Caco-2 (cell line): ENCODE measurements at regions of chr7 and their contacts with region 1.

Region 1: DNA sequence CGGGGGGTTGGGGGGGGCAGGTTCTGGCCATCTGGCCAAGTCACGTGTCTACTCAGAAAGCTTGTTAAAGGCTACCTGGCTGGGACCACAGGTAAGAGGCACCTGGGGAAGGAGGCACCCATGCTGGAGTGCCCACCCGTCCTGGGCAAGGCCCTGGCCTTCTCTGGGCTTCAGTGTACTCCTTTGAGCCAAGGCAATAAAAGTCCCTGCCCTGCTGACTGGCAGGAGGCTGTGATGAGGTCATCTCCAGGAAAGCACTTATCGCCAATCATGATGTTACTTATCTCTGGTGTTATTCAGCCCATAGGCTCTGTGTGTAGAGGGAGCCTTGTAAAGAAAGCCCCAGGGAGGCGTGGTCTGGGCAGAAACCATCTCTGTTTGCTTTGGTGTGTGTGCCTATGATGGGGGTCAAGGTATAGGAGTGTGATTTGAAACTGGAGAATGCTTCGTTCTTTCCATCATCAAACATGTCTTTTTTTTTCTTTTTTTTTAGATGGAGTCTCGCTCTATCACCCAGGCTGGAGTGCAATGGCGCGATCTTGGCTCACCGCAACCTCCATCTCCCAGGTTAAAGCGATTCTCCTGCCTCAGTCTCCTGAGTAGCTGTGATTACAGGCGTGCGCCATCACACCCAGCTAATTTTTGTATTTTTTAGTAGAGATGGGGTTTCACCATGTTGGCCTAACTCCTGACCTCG is 2.5 kb upstream of the CLDN4 start:
- DNase-seq: peak; percentile 85 to 95
- H3K4me3 ChIP-seq: peak overlapping the region; percentile 43
- H3K4me3 Mint-ChIP-seq: peak overlapping the region; percentile 75
- H3K27ac Mint-ChIP-seq: peak overlapping the region; percentile 98
- H3K4me1 ChIP-seq: peaks cover 38% of the 10 kb centered on the region
- H3K4me1 Mint-ChIP-seq: peaks cover 51% of the 10 kb centered on the region
- H3K27me3 ChIP-seq: no peaks in the 10 kb centered on the region
- H3K27me3 Mint-ChIP-seq: no peaks in the 10 kb centered on the region
- CTCF ChIP-seq: no peak

Region 2: DNA sequence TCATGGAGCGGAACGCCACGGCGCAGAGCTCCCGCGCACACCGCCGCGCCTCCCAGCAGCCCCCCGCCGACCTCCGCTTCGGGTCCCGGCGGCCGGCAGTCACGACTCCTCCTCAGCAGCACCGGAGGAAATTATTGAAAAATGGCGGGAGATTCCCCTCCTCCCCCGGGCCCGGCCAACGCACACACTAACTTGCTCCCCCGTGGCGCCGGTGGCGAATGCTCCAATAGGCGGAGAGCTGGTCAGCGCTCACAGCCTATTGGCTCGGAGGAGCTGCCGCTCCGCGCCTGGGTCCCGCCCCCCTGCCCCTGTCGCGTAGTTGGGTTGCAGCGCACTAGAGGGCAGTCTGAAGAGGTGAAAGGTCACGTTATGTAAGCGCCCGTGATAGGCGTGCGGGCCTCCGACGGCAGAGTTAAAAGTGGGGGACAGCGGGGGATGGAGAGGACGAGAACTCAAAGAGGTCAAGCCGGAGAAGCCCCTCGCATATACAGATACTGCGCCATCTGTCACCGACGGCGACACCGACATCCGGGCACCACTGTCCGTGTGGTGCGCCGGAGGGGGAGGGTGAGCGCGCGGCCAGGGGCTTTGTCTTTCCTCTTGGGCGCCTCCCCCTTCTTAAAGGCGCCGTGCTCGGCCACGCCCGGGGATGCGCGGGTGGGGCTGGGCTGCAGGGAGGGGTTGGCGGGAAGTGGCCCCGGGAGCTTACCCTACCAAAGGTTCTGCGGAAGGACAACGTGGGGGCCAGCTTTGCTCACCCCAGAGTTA is 306.0 kb before region 1 on chr7 and contains the start of gene BAZ1B:
- CTCF ChIA-PET with region 1: no interaction called
- POLR2A ChIA-PET with region 1: interaction called, 14 read pairs
- intact Hi-C with region 1: no loop called
- DNase-seq: peak; percentile 99
- H3K4me3 ChIP-seq: peak within 1 kb of the TSS; percentile 77
- H3K4me3 Mint-ChIP-seq: peak within 1 kb of the TSS; percentile 93
- H3K27ac Mint-ChIP-seq: peak within 1 kb of the TSS; percentile 98
- H3K4me1 ChIP-seq: peaks cover 18% of the 10 kb centered on the region
- H3K4me1 Mint-ChIP-seq: peaks cover 18% of the 10 kb centered on the region
- H3K27me3 ChIP-seq: no peaks in the 10 kb centered on the region
- H3K27me3 Mint-ChIP-seq: no peaks in the 10 kb centered on the region
- CTCF ChIP-seq: peak in 1 of 2 experiments; percentile 21
- total RNA-seq, gene BAZ1B: 85.2 and 85.7 TPM in 2 replicates

Region 3: GRCh38 chr7:73738612-73739374 is 89.5 kb before region 1 on chr7 and contains the start of gene ABHD11:
- CTCF ChIA-PET with region 1: interaction called, 5 read pairs
- POLR2A ChIA-PET with region 1: interaction called, 127 read pairs
- intact Hi-C with region 1: loop called (anchors 1 kb)
- DNase-seq: peak; percentile 99
- H3K4me3 ChIP-seq: peak within 1 kb of the TSS; percentile 63
- H3K4me3 Mint-ChIP-seq: peak within 1 kb of the TSS; percentile 98
- H3K27ac Mint-ChIP-seq: peak within 1 kb of the TSS; percentile 100
- H3K4me1 ChIP-seq: peaks cover 46% of the 10 kb centered on the region
- H3K4me1 Mint-ChIP-seq: peaks cover 25% of the 10 kb centered on the region
- H3K27me3 ChIP-seq: no peaks in the 10 kb centered on the region
- H3K27me3 Mint-ChIP-seq: no peaks in the 10 kb centered on the region
- CTCF ChIP-seq: no peak
- total RNA-seq, gene ABHD11: 38.9 and 47.2 TPM in 2 replicates

Region 4: GRCh38 chr7:73792594-73793292 is 35.5 kb before region 1 on chr7:
- CTCF ChIA-PET with region 1: interaction called, 5 read pairs
- POLR2A ChIA-PET with region 1: interaction called, 9 read pairs
- intact Hi-C with region 1: loop called (anchors 1 kb)
- DNase-seq: peak; percentile 91 to 98
- H3K4me3 ChIP-seq: no peak overlapping the region
- H3K4me3 Mint-ChIP-seq: no peak overlapping the region
- H3K27ac Mint-ChIP-seq: peak overlapping the region; percentile 10
- H3K4me1 ChIP-seq: peaks cover 40% of the 10 kb centered on the region
- H3K4me1 Mint-ChIP-seq: peaks cover 37% of the 10 kb centered on the region
- H3K27me3 ChIP-seq: no peaks in the 10 kb centered on the region
- H3K27me3 Mint-ChIP-seq: no peaks in the 10 kb centered on the region
- CTCF ChIP-seq: no peak

Region 5: GRCh38 chr7:73842247-73842895 is 14.1 kb after region 1 on chr7 and contains the start of gene METTL27:
- CTCF ChIA-PET with region 1: interaction called, 8 read pairs
- POLR2A ChIA-PET with region 1: interaction called, 52 read pairs
- intact Hi-C with region 1: no loop called
- DNase-seq: peak; percentile 95
- H3K4me3 ChIP-seq: peak within 1 kb of the TSS; percentile 58
- H3K4me3 Mint-ChIP-seq: peak within 1 kb of the TSS; percentile 84
- H3K27ac Mint-ChIP-seq: peak within 1 kb of the TSS; percentile 73
- H3K4me1 ChIP-seq: peaks cover 12% of the 10 kb centered on the region; the same call in 1 of the 2 replicates
- H3K4me1 Mint-ChIP-seq: peaks cover 18% of the 10 kb centered on the region
- H3K27me3 ChIP-seq: no peaks in the 10 kb centered on the region
- H3K27me3 Mint-ChIP-seq: no peaks in the 10 kb centered on the region
- CTCF ChIP-seq: no peak
- total RNA-seq, gene METTL27: 1.5 and 1.7 TPM in 2 replicates